Psoas muscle (tissue), 8 donors: ENCODE measurements at regions of chr1 and their contacts with region 1.

Region 1: DNA sequence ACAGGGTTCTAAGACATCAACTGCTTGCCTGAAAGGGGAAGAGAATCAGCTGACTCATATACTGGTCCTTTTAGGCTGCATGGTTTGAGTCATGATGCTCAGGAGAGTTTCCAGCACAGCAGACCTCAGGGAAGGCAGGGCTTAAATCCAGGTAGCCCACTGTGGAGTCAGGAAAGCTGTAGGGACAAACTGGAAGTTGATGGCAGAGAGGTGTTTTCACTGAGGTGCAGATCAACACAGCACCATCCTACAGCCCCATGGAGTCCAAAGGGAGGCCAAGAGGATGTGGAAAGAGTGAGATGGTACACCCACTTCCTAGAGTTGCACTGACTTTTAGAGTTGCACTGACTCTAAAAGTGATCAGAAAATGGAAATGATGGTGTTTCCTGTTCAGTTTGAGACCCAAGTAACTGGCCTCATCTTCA is 252.4 kb upstream of the DUSP10 start:
- DNase-seq: no peak
- ATAC-seq: no peak
- H3K4me3 ChIP-seq: no peak overlapping the region
- H3K27ac ChIP-seq: no peak overlapping the region
- H3K4me1 ChIP-seq: no peaks in the 10 kb centered on the region
- H3K27me3 ChIP-seq: no peaks in the 10 kb centered on the region
- CTCF ChIP-seq: no peak

Region 2: GRCh38 chr1:221839796-221840395 is 154.4 kb before region 1 on chr1:
- intact Hi-C with region 1: loop called in 1 of 2 experiments (anchors 10 kb)
- DNase-seq: peak; percentile 79 to 91
- ATAC-seq: peak; percentile 42 to 79 (median 74)
- H3K4me3 ChIP-seq: no peak overlapping the region
- H3K27ac ChIP-seq: no peak overlapping the region
- H3K4me1 ChIP-seq: no peaks in the 10 kb centered on the region
- H3K27me3 ChIP-seq: no peaks in the 10 kb centered on the region
- CTCF ChIP-seq: no peak

Region 3: GRCh38 chr1:221958156-221958562 is 36.1 kb before region 1 on chr1:
- intact Hi-C with region 1: no loop called
- DNase-seq: no peak
- ATAC-seq: no peak
- H3K4me3 ChIP-seq: no peak overlapping the region
- H3K27ac ChIP-seq: no peak overlapping the region
- H3K4me1 ChIP-seq: no peaks in the 10 kb centered on the region
- H3K27me3 ChIP-seq: no peaks in the 10 kb centered on the region
- CTCF ChIP-seq: no peak